WTC11 (cell line): ENCODE measurements at regions of chr11 and their contacts with region 1.

Region 1: DNA sequence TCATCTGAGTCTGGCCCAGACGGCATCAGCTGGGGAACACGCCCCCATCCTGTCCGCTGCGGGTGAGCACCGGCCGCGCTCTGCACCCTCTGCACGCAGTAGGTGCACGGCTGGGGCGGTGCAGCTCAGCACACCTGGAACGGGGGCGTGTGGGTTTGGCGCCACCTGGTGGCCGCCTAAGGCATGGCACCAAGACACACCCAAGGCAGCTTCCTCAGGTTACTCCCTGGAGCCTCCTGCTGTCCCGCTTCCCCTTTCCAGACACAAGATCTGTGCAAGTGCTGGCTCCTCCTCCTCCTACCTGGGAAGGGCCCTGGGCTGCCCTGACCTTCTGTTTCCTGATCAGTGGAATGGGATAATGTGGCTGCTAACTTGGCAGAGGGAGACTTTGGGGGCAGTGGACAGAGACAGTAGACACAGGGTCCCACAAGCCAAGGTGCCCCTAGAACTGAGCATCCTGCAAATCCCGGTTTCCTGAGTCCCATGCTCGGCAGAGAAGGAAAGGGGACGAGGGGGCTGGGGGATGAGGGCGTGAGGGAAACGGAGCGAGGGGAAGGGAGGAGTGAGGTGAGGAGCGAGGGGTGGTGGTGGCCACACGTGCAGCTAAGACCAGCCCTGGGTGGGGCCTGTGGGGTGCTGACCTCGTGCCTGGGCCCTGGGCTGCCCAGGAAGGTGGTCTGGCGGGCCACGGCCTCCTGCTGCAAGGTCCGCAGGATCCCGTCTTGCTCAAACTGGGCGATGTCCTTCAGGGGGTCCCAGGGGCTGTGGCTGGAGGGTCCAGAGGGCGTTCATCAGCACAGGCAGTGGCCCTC is 34.8 kb upstream of the CARS1 start:
- DNase-seq: peak; percentile 95
- ATAC-seq: peak; percentile 92
- H3K4me3 Mint-ChIP-seq: no peak overlapping the region
- H3K27ac Mint-ChIP-seq: peak overlapping the region; percentile 21; the same call in 1 of the 2 replicates
- H3K4me1 Mint-ChIP-seq: peaks cover 23% of the 10 kb centered on the region
- H3K27me3 Mint-ChIP-seq: peaks cover 7% of the 10 kb centered on the region
- CTCF ChIP-seq: peak; percentile 100

Region 2: DNA sequence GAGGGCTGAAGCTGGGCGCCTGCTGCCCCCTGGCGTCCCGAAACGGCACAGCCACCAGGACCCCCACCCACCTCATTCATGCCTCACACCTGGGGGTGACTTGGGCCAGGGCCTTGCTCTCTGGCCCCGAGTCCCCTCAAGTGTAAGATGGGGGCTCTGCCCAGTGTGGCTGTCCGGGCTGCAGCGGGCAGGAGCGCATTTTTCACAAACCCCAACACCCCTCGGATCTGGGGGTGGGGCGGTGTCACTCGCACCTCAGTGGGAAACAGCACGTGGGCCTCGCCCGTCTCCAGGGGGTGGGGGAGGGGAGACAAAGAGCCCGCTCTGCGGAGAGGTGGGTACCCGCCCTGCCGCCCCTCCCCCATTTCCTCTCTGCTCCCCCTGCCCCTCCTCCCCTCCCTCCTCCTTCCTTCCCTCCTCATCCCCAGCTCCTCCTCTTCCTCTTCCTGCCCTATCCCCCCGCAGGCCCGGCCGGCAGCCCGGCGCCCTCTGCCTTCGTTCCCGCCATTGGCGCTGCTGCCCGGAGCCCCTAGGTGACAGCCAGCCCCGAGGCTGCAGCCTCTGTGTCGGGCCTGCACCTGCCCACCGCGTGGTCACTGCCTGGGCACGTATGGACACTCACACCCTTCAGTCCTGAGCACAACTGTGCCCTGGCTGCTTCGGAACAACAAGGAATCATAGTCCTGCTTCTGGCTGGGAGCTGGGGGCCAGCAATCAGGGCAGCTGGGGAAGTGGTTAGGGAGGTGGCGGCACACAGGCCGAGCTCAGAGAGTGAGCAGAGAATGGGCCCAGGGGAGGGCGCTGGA is 199.6 kb before region 1 on chr11:
- CTCF ChIA-PET with region 1: interaction called, 10 read pairs
- POLR2A ChIA-PET with region 1: no interaction called
- DNase-seq: peak; percentile 84
- ATAC-seq: peak; percentile 67
- H3K4me3 Mint-ChIP-seq: peak overlapping the region; percentile 68
- H3K27ac Mint-ChIP-seq: 0 out of 2 replicates have a peak overlapping the region, but pooled peaks have one; percentile 23
- H3K4me1 Mint-ChIP-seq: peaks cover 11% of the 10 kb centered on the region
- H3K27me3 Mint-ChIP-seq: peaks cover 56% of the 10 kb centered on the region
- CTCF ChIP-seq: peak; percentile 93

Region 3: DNA sequence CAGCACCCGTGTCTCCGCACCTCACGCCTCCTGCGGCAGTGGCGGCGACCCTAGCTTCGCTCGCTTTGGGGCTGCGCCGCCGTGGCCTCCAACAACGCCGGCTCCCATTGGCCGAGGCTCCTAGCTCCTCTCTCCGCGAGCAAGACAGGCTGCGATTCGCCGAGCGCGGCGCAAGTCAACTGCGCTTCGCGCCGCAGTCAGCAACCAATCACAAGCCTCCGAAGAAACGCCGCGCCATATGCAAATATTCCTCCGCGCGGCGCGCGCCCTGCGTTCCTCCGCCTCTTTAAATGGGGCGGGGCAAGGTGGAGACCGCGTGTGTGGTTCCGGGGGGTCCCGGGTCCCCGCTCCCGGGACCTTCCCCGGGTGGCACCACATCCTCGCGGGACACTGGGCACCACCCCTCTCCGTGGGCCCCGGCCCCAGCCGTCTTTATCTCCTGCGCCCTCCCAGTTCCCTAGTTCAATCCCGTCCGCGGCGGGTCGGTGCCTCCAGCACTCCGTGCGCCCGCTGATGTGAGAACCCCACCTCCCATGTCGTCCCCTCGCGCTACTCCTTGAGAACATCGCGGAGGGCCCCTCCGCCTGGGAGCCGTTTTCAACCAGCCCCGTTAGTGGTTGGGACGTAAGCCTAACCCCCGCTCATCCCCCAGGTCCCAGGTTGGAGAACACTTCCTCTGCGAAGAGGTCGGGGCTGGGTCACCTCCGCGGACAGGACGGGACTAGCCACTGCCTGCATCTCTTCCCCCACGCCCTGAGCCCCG is 99.6 kb before region 1 on chr11 and contains the start of gene NAP1L4:
- CTCF ChIA-PET with region 1: interaction called, 11 read pairs
- POLR2A ChIA-PET with region 1: interaction called, 4 read pairs
- DNase-seq: peak; percentile 97
- ATAC-seq: peak; percentile 84
- H3K4me3 Mint-ChIP-seq: peak within 1 kb of the TSS; percentile 99
- H3K27ac Mint-ChIP-seq: peak within 1 kb of the TSS; percentile 94
- H3K4me1 Mint-ChIP-seq: peaks cover 36% of the 10 kb centered on the region
- H3K27me3 Mint-ChIP-seq: no peaks in the 10 kb centered on the region; the same call in 1 of the 2 replicates
- CTCF ChIP-seq: no peak
- total RNA-seq, gene NAP1L4: 160 to 189 TPM (median 181 TPM) in 3 replicates

Region 4: GRCh38 chr11:3037040-3037944 is 54.7 kb before region 1 on chr11:
- CTCF ChIA-PET with region 1: interaction called, 157 read pairs
- POLR2A ChIA-PET with region 1: interaction called, 3 read pairs
- DNase-seq: peak; percentile 89
- ATAC-seq: peak; percentile 96
- H3K4me3 Mint-ChIP-seq: no peak overlapping the region
- H3K27ac Mint-ChIP-seq: peak overlapping the region; percentile 8; the same call in 1 of the 2 replicates
- H3K4me1 Mint-ChIP-seq: no peaks in the 10 kb centered on the region
- H3K27me3 Mint-ChIP-seq: no peaks in the 10 kb centered on the region
- CTCF ChIP-seq: peak; percentile 68

Region 5: GRCh38 chr11:3057069-3057963 is 34.7 kb before region 1 on chr11 and contains the start of gene CARS1:
- CTCF ChIA-PET with region 1: interaction called, 32 read pairs
- POLR2A ChIA-PET with region 1: interaction called, 4 read pairs
- DNase-seq: peak; percentile 96
- ATAC-seq: peak; percentile 88
- H3K4me3 Mint-ChIP-seq: peak within 1 kb of the TSS; percentile 88
- H3K27ac Mint-ChIP-seq: peak within 1 kb of the TSS; percentile 91
- H3K4me1 Mint-ChIP-seq: peaks cover 29% of the 10 kb centered on the region
- H3K27me3 Mint-ChIP-seq: no peaks in the 10 kb centered on the region
- CTCF ChIP-seq: no peak
- total RNA-seq, gene CARS1: 57.9 to 92.0 TPM (median 62.0 TPM) in 3 replicates

Region 6: GRCh38 chr11:3109921-3110706 is 18.1 kb after region 1 on chr11:
- CTCF ChIA-PET with region 1: interaction called, 28 read pairs
- POLR2A ChIA-PET with region 1: interaction called, 4 read pairs
- DNase-seq: peak; percentile 85
- ATAC-seq: peak; percentile 93
- H3K4me3 Mint-ChIP-seq: no peak overlapping the region
- H3K27ac Mint-ChIP-seq: no peak overlapping the region
- H3K4me1 Mint-ChIP-seq: peaks cover 17% of the 10 kb centered on the region
- H3K27me3 Mint-ChIP-seq: peaks cover 3% of the 10 kb centered on the region; the same call in 1 of the 2 replicates
- CTCF ChIP-seq: peak; percentile 65

Region 7: DNA sequence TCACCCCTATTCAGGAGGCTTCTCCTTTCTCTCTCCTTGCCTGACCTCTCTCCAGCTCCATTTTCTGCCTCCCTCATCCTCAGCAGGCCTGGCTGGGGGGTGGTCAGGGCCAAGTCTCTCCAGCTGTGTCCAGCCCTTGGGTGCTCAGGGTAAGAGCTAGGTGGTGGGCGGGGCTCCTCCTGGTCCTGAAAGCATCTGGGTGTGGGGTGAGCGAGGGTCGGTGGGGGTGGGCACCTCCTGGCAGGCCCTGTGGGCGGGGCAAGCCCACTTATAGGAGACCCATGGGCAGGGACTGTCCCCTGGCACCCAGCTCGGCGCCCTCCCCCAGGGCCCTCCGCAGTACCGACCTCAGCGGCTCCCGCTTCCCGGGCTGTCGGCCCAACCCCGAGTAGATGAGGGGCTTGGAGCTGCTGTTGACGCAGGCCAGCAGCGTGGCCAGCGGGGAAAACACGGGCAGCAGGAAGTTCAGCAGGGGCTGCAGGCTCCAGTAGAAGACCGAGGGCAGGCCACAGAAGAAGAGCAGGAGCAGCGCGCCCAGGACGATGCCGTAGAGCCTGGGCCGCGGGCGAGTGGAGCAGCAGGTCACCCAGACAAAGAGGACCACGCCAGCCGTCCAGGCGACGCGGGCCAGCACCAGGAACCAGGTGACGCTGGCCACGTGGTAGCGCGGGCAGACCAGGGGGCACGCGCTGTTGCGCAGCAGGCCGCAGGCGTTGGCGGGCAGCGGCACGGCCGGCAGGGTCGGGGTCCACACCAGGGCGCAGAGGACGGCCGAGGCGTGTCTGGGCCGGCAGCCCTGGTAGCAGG is 125.9 kb after region 1 on chr11:
- CTCF ChIA-PET with region 1: interaction called, 10 read pairs
- POLR2A ChIA-PET with region 1: no interaction called
- DNase-seq: peak; percentile 10
- ATAC-seq: no peak
- H3K4me3 Mint-ChIP-seq: no peak overlapping the region
- H3K27ac Mint-ChIP-seq: no peak overlapping the region
- H3K4me1 Mint-ChIP-seq: peaks cover 41% of the 10 kb centered on the region
- H3K27me3 Mint-ChIP-seq: no peaks in the 10 kb centered on the region; the same call in 1 of the 2 replicates
- CTCF ChIP-seq: no peak